ENCODE measurements at regions of chr9 and their contacts with region 1.

Region 1: GRCh38 chr9:69215774-69216485 is 41.9 kb downstream of the TJP2 start:
- DNase-seq: no peak

Region 2: GRCh38 chr9:68981789-68982188 is 234.1 kb before region 1 on chr9:
- intact Hi-C with region 1: no loop called
- DNase-seq: no peak

Region 3: DNA sequence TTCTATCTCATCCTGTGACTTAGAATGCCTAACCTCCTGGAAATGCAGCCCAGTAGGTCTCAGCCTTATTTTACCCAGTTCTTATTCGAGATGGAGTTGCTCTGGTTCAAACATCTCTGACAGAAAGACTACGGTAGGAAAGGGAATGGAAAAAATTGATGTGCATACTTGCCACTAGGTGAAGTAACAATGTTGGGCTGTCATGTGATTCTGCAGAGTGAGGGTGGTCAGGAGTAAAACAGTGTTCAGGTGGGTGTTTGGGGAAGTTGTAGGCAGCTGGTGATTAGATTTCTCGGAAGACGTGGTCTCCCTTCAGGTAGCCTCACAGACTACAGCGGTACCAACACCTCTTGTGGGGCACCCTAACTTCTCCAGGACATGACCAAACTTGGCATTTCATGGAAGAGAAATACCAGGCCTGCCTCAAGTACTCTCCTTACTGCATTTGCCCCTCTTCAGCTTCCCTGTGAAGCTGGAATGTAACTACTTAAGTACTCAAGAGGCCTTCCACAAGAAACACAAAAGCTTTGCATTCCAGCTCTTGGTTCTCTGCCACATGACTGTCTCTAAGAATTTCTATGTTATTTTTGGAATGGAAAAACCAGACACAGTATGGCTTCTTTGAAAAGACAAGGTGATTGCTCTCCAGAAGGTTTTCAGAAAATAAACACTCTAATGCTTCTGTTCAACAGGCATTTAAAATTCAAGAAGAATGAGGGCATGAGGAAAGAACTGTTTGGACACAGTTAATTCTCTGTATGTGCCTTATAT is 91.7 kb after region 1 on chr9:
- intact Hi-C with region 1: loop called (anchors 5 kb)
- DNase-seq: no peak

Region 4: GRCh38 chr9:69376651-69377050 is 160.7 kb after region 1 on chr9:
- intact Hi-C with region 1: loop called (anchors 5 kb)
- DNase-seq: no peak

Region 5: DNA sequence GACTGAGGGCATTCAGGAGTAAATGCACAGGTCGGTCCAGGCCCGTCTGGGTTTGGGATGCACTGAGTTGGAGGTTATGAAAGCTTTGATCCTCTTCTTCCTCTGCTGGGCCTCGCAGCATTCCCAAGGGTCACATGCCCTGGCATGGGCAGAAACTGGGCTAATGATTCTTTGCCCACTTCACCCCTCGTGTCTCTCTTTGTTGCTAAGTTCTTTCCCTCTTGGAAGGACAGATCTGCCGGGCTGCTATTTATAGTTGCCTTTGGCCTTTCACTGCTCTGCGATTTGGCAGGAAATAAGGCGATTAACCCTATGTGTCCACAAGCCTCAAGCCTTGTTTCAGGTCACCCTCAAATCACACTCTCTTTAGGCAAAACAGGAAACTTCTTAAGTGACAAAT is 176.0 kb after region 1 on chr9:
- intact Hi-C with region 1: loop called (anchors 5 kb)
- DNase-seq: no peak